CD4-positive, alpha-beta memory T cell (primary cell): ENCODE measurements at regions of chr15 and their contacts with region 1.

Region 1: GRCh38 chr15:90291679-90292356 is 26.3 kb downstream of the NGRN start:
- DNase-seq: no peak
- H3K4me3 ChIP-seq: no peak overlapping the region
- H3K4me3 Mint-ChIP-seq: no peak overlapping the region
- H3K27ac ChIP-seq: no peak overlapping the region
- H3K27ac Mint-ChIP-seq: peak overlapping the region in 1 of 7 donors; percentile 22
- H3K4me1 ChIP-seq: peaks cover 4% of the 10 kb centered on the region
- H3K4me1 Mint-ChIP-seq: peaks cover 3 to 7% (median 6%) of the 10 kb centered on the region in 4 donors
- H3K27me3 ChIP-seq: no peaks in the 10 kb centered on the region
- H3K27me3 Mint-ChIP-seq: no peaks in the 10 kb centered on the region

Region 2: GRCh38 chr15:90271459-90272166 is 20.2 kb before region 1 on chr15:
- CTCF ChIA-PET with region 1: interaction called, 11 read pairs
- POLR2A ChIA-PET with region 1: no interaction called
- intact Hi-C with region 1: no loop called
- DNase-seq: no peak
- H3K4me3 ChIP-seq: no peak overlapping the region
- H3K4me3 Mint-ChIP-seq: peak overlapping the region in 1 of 8 donors; percentile 8
- H3K27ac ChIP-seq: no peak overlapping the region
- H3K27ac Mint-ChIP-seq: peak overlapping the region in 6 of 7 donors; percentile 8 to 65 (median 46)
- H3K4me1 ChIP-seq: peaks cover 49% of the 10 kb centered on the region
- H3K4me1 Mint-ChIP-seq: peaks cover 31 to 61% (median 49%) of the 10 kb centered on the region in 4 donors
- H3K27me3 ChIP-seq: no peaks in the 10 kb centered on the region
- H3K27me3 Mint-ChIP-seq: no peaks in the 10 kb centered on the region

Region 3: DNA sequence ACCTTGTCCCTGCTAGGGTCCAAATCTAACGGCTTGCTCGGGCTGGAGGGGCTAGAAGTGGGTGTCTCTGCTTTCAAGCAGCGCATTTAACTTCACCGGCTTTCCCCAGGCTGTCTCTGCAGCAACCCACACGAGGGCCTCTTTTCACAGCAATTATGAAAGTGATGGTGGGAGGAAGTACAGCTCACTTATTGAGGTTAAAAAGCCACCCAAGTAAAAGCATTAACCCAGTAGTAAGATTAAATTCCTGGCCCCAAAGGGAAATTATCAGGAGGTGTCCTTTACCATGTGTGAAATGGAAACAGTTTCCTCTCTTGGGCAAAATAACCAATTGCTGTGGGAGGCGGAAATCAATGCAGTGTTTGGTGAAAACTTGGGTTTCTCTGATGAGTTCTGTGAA is 14.7 kb after region 1 on chr15:
- CTCF ChIA-PET with region 1: interaction called, 29 read pairs
- POLR2A ChIA-PET with region 1: no interaction called
- intact Hi-C with region 1: no loop called
- DNase-seq: peak in 4 of 5 donors; percentile 12 to 29 (median 16)
- H3K4me3 ChIP-seq: no peak overlapping the region
- H3K4me3 Mint-ChIP-seq: peak overlapping the region; percentile 39 to 83 (median 68)
- H3K27ac ChIP-seq: no peak overlapping the region
- H3K27ac Mint-ChIP-seq: peak overlapping the region; percentile 57 to 95 (median 87)
- H3K4me1 ChIP-seq: peaks cover 18% of the 10 kb centered on the region
- H3K4me1 Mint-ChIP-seq: peaks cover 15 to 28% (median 20%) of the 10 kb centered on the region in 4 donors
- H3K27me3 ChIP-seq: no peaks in the 10 kb centered on the region
- H3K27me3 Mint-ChIP-seq: no peaks in the 10 kb centered on the region

Region 4: GRCh38 chr15:90545095-90545494 is 253.3 kb after region 1 on chr15:
- CTCF ChIA-PET with region 1: no interaction called
- POLR2A ChIA-PET with region 1: no interaction called
- intact Hi-C with region 1: no loop called
- DNase-seq: no peak
- H3K4me3 ChIP-seq: no peak overlapping the region
- H3K4me3 Mint-ChIP-seq: no peak overlapping the region
- H3K27ac ChIP-seq: no peak overlapping the region
- H3K27ac Mint-ChIP-seq: peak overlapping the region in 2 of 7 donors; percentile 6 to 80
- H3K4me1 ChIP-seq: peaks cover 54% of the 10 kb centered on the region
- H3K4me1 Mint-ChIP-seq: peaks cover 30 to 66% (median 53%) of the 10 kb centered on the region in 4 donors
- H3K27me3 ChIP-seq: no peaks in the 10 kb centered on the region
- H3K27me3 Mint-ChIP-seq: no peaks in the 10 kb centered on the region